Right ventricle myocardium superior (tissue), 1 donor: ENCODE measurements at regions of chr2 and their contacts with region 1.

Region 1: GRCh38 chr2:200811336-200812121 is at the start of gene BZW1:
- DNase-seq: peak; percentile 96
- ATAC-seq: peak; percentile 95
- total RNA-seq, gene BZW1: 72.2 TPM

Region 2: DNA sequence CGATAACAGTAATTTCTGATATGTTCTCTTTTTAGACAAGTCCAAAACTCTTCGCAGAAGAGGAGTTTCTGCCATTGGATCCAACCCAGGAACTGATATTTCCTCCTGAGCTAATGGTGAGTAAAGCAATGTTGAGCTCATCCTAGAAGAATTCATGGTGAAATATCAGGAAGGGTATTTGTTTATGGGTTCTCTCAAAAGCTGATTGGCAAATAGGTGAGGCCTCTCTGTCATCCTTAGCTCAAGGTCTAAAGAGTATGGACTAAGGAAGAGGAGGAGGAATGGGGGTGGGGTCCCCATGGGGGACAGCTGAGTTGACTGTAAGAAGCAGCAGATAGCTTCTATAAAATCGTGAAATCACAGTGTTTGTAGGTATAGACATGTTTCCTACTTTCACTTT is 207.5 kb before region 1 on chr2:
- intact Hi-C with region 1: no loop called
- DNase-seq: no peak
- ATAC-seq: no peak

Region 3: GRCh38 chr2:200713003-200713703 is 98.4 kb before region 1 on chr2:
- intact Hi-C with region 1: loop called (anchors 5 kb)
- DNase-seq: peak; percentile 89
- ATAC-seq: peak; percentile 97

Region 4: DNA sequence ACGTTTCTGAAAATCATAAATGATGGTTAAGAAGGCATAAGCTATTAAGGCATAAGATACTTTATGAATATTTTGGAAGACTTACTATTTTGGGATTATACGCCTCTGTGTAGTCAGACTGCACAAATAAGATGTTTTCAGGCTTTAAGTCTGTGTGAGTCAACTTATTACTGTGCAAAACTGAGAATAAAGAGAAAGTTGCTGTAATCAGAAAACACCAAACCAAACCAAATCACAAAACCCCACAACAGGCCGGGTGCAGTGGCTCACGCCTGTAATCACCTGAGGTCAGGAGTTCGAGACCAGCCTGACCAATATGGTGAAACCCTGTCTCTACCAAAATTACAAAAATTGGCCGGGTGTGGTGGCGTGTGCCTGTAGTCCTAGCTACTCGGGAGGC is 45.3 kb after region 1 on chr2:
- intact Hi-C with region 1: loop called (anchors 5 kb)
- DNase-seq: no peak
- ATAC-seq: no peak

Region 5: GRCh38 chr2:201406077-201406662 is 594.6 kb after region 1 on chr2:
- intact Hi-C with region 1: no loop called
- DNase-seq: no peak
- ATAC-seq: peak; percentile 60